ENCODE measurements at regions of chr4 and their contacts with region 1.

Region 1: DNA sequence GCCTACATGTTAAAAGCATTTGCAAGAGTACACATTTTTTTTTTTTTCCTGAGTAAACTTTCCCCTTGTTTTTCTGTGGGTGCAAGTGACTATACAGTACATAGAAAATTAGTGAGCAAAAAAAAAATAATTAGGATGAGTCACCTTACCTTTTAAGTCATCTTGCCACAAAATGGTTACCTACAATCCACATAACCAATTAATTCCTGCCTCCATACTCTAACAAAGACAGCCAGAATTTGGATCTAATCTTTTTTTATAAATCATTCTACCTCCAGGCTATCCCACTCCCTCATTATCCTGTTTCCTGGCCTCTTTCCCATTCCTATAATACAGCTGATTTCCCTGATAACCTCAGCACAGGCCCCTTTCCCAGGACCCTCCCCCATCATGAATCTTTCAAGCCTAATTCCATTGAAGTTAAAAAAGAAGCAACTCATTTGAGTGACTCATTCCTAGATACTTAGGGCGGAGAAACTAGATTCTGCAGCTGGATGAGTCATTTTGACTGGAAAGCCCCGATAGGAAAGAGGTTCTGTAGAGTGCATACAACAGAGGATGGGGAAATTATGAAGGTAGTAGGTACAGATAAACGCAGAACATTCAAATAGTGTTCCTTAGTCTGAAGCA is 128.2 kb downstream of the C4orf51 start:
- DNase-seq: peak; percentile 93
- H3K4me3 ChIP-seq: no peak overlapping the region
- H3K27ac ChIP-seq: peak overlapping the region; percentile 82
- H3K4me1 ChIP-seq: peaks cover 44% of the 10 kb centered on the region
- H3K27me3 ChIP-seq: no peaks in the 10 kb centered on the region
- CTCF ChIP-seq: no peak
- POLR2A ChIP-seq: no peak

Region 2: GRCh38 chr4:145779319-145779801 is 28.8 kb before region 1 on chr4:
- CTCF ChIA-PET with region 1: no interaction called
- POLR2A ChIA-PET with region 1: no interaction called
- dilution Hi-C with region 1: no loop called
- intact Hi-C with region 1: loop called (anchors 1 kb)
- DNase-seq: peak; percentile 28
- H3K4me3 ChIP-seq: no peak overlapping the region
- H3K27ac ChIP-seq: peak overlapping the region; percentile 54
- H3K4me1 ChIP-seq: peaks cover 36% of the 10 kb centered on the region
- H3K27me3 ChIP-seq: no peaks in the 10 kb centered on the region
- CTCF ChIP-seq: no peak
- POLR2A ChIP-seq: no peak

Region 3: GRCh38 chr4:146073517-146073916 is 265.4 kb after region 1 on chr4:
- CTCF ChIA-PET with region 1: no interaction called
- POLR2A ChIA-PET with region 1: no interaction called
- dilution Hi-C with region 1: no loop called
- intact Hi-C with region 1: no loop called
- DNase-seq: no peak
- H3K4me3 ChIP-seq: no peak overlapping the region
- H3K27ac ChIP-seq: no peak overlapping the region
- H3K4me1 ChIP-seq: no peaks in the 10 kb centered on the region
- H3K27me3 ChIP-seq: peaks cover 0 to 13% of the 10 kb centered on the region in 2 experiments
- CTCF ChIP-seq: no peak
- POLR2A ChIP-seq: no peak